Aorta (tissue), 5 donors: ENCODE measurements at regions of chr14 and their contacts with region 1.

Region 1: GRCh38 chr14:52299692-52300278 is 14.3 kb upstream of the PTGER2 start:
- DNase-seq: no peak
- ATAC-seq: peak; percentile 74
- H3K4me3 ChIP-seq: no peak overlapping the region
- H3K27ac ChIP-seq: no peak overlapping the region
- H3K4me1 ChIP-seq: no peaks in the 10 kb centered on the region
- H3K27me3 ChIP-seq: no peaks in the 10 kb centered on the region

Region 2: GRCh38 chr14:52279405-52279804 is 20.4 kb before region 1 on chr14:
- intact Hi-C with region 1: no loop called
- DNase-seq: no peak
- ATAC-seq: no peak
- H3K4me3 ChIP-seq: no peak overlapping the region
- H3K27ac ChIP-seq: no peak overlapping the region
- H3K4me1 ChIP-seq: peaks cover 0 to 1% of the 10 kb centered on the region in 2 donors
- H3K27me3 ChIP-seq: no peaks in the 10 kb centered on the region

Region 3: GRCh38 chr14:52473557-52473956 is 173.8 kb after region 1 on chr14:
- intact Hi-C with region 1: loop called (anchors 2 to 5 kb)
- DNase-seq: no peak
- ATAC-seq: no peak
- H3K4me3 ChIP-seq: no peak overlapping the region
- H3K27ac ChIP-seq: no peak overlapping the region
- H3K4me1 ChIP-seq: no peaks in the 10 kb centered on the region
- H3K27me3 ChIP-seq: no peaks in the 10 kb centered on the region